Endothelial cell of umbilical vein (primary cell): ENCODE measurements at regions of chr9 and their contacts with region 1.

Region 1: GRCh38 chr9:69056191-69056815 is 20.8 kb downstream of the FXN start:
- DNase-seq: no peak
- H3K4me3 ChIP-seq: no peak overlapping the region
- H3K27ac ChIP-seq: no peak overlapping the region
- H3K4me1 ChIP-seq: peaks cover 3% of the 10 kb centered on the region
- H3K27me3 ChIP-seq: no peaks in the 10 kb centered on the region
- CTCF ChIP-seq: no peak
- POLR2A ChIP-seq: no peak

Region 2: DNA sequence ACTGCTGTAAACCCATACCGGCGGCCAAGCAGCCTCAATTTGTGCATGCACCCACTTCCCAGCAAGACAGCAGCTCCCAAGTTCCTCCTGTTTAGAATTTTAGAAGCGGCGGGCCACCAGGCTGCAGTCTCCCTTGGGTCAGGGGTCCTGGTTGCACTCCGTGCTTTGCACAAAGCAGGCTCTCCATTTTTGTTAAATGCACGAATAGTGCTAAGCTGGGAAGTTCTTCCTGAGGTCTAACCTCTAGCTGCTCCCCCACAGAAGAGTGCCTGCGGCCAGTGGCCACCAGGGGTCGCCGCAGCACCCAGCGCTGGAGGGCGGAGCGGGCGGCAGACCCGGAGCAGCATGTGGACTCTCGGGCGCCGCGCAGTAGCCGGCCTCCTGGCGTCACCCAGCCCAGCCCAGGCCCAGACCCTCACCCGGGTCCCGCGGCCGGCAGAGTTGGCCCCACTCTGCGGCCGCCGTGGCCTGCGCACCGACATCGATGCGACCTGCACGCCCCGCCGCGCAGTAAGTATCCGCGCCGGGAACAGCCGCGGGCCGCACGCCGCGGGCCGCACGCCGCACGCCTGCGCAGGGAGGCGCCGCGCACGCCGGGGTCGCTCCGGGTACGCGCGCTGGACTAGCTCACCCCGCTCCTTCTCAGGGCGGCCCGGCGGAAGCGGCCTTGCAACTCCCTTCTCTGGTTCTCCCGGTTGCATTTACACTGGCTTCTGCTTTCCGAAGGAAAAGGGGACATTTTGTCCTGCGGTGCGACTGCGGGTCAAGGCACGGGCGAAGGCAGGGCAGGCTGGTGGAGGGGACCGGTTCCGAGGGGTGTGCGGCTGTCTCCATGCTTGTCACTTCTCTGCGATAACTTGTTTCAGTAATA is 20.6 kb before region 1 on chr9 and contains the start of gene FXN:
- CTCF ChIA-PET with region 1: interaction called, 16 read pairs
- POLR2A ChIA-PET with region 1: no interaction called
- dilution Hi-C with region 1: no loop called
- intact Hi-C with region 1: no loop called
- DNase-seq: peak; percentile 85
- H3K4me3 ChIP-seq: peak within 1 kb of the TSS; percentile 44 to 81 (median 67)
- H3K27ac ChIP-seq: peak within 1 kb of the TSS; percentile 31
- H3K4me1 ChIP-seq: peaks cover 18% of the 10 kb centered on the region
- H3K27me3 ChIP-seq: no peaks in the 10 kb centered on the region
- CTCF ChIP-seq: peak; percentile 99 to 100
- POLR2A ChIP-seq: peak; percentile 52
- total RNA-seq, gene FXN: 17.1 and 21.2 TPM in 2 replicates

Region 3: GRCh38 chr9:69121828-69122548 is 65.7 kb after region 1 on chr9:
- CTCF ChIA-PET with region 1: interaction called, 51 read pairs
- POLR2A ChIA-PET with region 1: no interaction called
- dilution Hi-C with region 1: no loop called
- intact Hi-C with region 1: loop called (anchors 1 kb)
- DNase-seq: peak; percentile 81
- H3K4me3 ChIP-seq: peak overlapping the region; percentile 69 to 83 (median 75)
- H3K27ac ChIP-seq: peak overlapping the region; percentile 69
- H3K4me1 ChIP-seq: peaks cover 21% of the 10 kb centered on the region
- H3K27me3 ChIP-seq: no peaks in the 10 kb centered on the region
- CTCF ChIP-seq: no peak
- POLR2A ChIP-seq: no peak

Region 4: DNA sequence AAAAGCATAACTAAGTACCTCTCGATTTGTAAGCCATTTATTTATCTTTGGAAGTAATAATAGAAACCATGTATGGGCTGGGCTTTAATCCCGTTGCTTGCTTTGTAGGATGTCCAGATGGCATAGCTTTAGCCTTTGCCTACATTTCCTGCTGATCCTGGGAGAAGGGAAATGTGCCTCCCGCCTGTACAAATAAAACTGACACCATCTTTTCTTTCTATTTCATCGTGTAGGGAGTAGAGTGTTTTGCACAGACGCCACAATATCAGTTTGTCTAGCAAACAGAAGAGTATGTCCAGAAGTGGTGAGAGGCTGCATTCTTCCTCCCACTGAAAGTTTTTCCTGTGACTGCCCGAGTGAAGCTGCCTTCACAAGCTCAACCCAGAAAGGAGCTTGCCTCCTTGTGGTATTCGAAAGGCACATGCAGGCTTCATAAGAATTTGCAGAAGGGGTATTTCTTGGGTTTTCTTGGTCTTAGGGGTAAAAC is 93.1 kb after region 1 on chr9:
- CTCF ChIA-PET with region 1: interaction called, 71 read pairs
- POLR2A ChIA-PET with region 1: no interaction called
- dilution Hi-C with region 1: no loop called
- intact Hi-C with region 1: loop called (anchors 1 kb)
- DNase-seq: peak; percentile 96
- H3K4me3 ChIP-seq: peak overlapping the region in 1 of 3 experiments; percentile 45
- H3K27ac ChIP-seq: peak overlapping the region; percentile 51
- H3K4me1 ChIP-seq: peaks cover 22% of the 10 kb centered on the region
- H3K27me3 ChIP-seq: no peaks in the 10 kb centered on the region
- CTCF ChIP-seq: peak; percentile 21 to 49
- POLR2A ChIP-seq: peak; percentile 47

Region 5: GRCh38 chr9:69180670-69181069 is 124.4 kb after region 1 on chr9:
- CTCF ChIA-PET with region 1: interaction called, 21 read pairs
- POLR2A ChIA-PET with region 1: no interaction called
- dilution Hi-C with region 1: loop called (anchors 10 kb)
- intact Hi-C with region 1: no loop called
- DNase-seq: peak; percentile 98
- H3K4me3 ChIP-seq: peak overlapping the region in 1 of 3 experiments; percentile 36
- H3K27ac ChIP-seq: peak overlapping the region; percentile 98
- H3K4me1 ChIP-seq: peaks cover 51% of the 10 kb centered on the region
- H3K27me3 ChIP-seq: no peaks in the 10 kb centered on the region
- CTCF ChIP-seq: no peak
- POLR2A ChIP-seq: no peak

Region 6: GRCh38 chr9:69223605-69224004 is 167.3 kb after region 1 on chr9:
- CTCF ChIA-PET with region 1: interaction called, 37 read pairs
- POLR2A ChIA-PET with region 1: interaction called, 4 read pairs
- dilution Hi-C with region 1: no loop called
- intact Hi-C with region 1: no loop called
- DNase-seq: peak; percentile 74
- H3K4me3 ChIP-seq: no peak overlapping the region
- H3K27ac ChIP-seq: no peak overlapping the region
- H3K4me1 ChIP-seq: no peaks in the 10 kb centered on the region
- H3K27me3 ChIP-seq: no peaks in the 10 kb centered on the region
- CTCF ChIP-seq: peak; percentile 85
- POLR2A ChIP-seq: no peak